ENCODE measurements at regions of chr20 and their contacts with region 1.

Region 1: DNA sequence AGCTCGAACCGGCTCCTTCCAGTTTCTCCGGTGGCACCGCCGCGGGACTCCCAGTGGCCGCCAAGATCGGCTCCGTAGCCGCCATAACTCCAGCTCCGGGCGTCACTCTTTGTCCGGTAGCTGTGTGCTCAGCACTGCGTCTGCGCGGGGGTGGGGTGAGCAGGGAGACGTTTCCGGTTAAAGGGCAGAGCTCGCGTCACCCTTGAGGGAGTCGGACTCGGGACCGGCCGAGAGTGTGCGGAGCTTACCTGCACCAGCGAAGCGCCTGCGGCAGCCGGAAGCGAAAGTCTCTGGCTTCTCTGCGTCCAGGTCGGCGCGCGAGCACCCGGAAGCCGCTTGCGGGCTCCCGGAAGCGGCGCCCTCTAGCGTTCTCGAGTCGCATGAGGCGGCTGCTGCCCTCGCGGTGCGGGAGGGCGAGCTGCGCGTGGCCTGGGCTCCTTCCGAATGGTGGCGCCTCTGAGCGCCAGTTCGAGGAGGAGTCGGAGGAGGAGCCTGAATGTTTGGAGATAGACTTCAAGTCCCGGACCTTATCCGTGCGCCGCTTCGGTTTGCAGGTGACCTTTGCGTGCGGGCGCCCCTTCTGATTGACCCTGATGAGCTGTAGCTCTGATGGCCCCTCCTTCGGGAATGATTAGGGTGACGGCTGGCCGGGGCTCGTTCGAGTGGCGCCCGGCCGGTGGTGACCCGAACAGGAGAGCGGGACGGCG is at the start of gene SCAND1:
- DNase-seq: peak; percentile 91 to 99 (median 95)
- ATAC-seq: peak; percentile 86 to 91 (median 88)
- H3K4me3 ChIP-seq: peak within 1 kb of the TSS; percentile 82 to 87
- H3K4me3 Mint-ChIP-seq: peak within 1 kb of the TSS; percentile 95 to 99 (median 99)
- H3K27ac ChIP-seq: peak within 1 kb of the TSS; percentile 98
- H3K27ac Mint-ChIP-seq: peak within 1 kb of the TSS; percentile 99 to 100
- H3K4me1 ChIP-seq: peaks cover 14 to 29% of the 10 kb centered on the region in 2 experiments
- H3K4me1 Mint-ChIP-seq: peaks cover 20 to 23% (median 21%) of the 10 kb centered on the region in 3 donors
- H3K27me3 ChIP-seq: no peaks in the 10 kb centered on the region
- H3K27me3 Mint-ChIP-seq: no peaks in the 10 kb centered on the region
- total RNA-seq, gene SCAND1: 50.0 to 78.8 (median 70.8) TPM

Region 2: DNA sequence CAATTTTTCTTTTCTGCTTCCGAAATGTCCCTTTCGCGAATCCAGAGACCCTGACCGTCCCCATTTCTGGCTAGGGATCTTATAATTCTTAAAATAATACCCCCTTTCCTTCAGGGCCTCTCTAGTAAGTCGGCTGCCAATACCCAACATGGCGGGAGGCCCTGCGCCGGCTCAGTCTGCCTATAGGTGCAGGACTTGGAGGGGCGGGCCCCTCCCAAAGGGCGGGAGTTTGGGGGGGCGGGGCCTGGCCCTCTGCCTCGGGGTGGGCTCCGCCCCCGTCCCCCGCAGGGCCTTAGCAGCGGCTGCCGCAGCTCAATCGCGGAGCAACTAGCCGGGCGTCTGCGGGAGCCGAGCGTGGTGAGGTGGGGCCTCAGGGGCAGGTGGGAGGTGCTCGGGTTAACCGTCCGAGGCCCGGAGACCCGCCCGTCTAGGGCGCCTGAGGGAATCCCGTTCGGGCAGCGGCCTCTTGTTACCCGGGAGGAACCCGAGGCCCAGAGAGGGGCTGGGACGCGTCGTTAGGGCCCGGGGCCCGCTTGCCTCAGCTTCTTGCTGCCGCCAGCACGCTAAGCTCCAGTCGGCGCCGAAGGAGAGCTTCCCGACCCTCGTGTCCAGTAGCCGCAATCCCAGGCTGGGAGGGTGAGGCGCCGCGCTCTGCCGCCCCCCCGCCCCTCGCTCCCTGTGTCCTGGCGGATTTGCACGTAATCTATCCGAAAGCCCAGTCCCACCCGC is 499.3 kb before region 1 on chr20 and contains the start of gene CEP250:
- CTCF ChIA-PET with region 1: interaction called in 1 of 2 experiments, 13 read pairs
- POLR2A ChIA-PET with region 1: interaction called in 1 of 2 experiments, 7 read pairs
- DNase-seq: peak; percentile 88 to 96 (median 93)
- ATAC-seq: peak; percentile 95 to 99 (median 98)
- H3K4me3 ChIP-seq: peak within 1 kb of the TSS; percentile 97 to 99
- H3K4me3 Mint-ChIP-seq: peak within 1 kb of the TSS; percentile 86 to 94 (median 93)
- H3K27ac ChIP-seq: peak within 1 kb of the TSS; percentile 90
- H3K27ac Mint-ChIP-seq: peak within 1 kb of the TSS; percentile 98 to 99
- H3K4me1 ChIP-seq: peaks cover 7 to 19% of the 10 kb centered on the region in 2 experiments
- H3K4me1 Mint-ChIP-seq: peaks cover 8 to 29% (median 22%) of the 10 kb centered on the region in 3 donors
- H3K27me3 ChIP-seq: no peaks in the 10 kb centered on the region
- H3K27me3 Mint-ChIP-seq: no peaks in the 10 kb centered on the region
- total RNA-seq, gene CEP250: 45.7 to 70.7 (median 67.4) TPM

Region 3: DNA sequence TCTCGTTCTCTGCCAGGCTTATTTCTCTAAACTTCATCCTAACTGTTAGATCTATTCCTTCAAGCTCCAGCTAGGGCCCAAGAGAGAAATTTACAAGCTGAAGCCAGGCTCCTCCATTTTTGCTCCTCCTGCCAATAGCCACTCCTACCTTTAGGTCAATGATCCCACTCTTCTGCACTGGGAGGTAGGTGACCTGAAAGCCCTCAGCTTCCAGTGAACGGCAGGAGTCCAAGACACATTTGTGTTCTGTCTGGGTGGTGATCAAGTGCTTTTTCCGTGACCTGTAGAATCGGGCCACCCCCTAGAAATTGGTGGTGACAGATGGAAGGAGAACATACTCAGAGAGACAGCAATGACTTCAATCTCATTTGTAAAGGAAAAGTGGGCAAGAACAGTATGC is 264.1 kb before region 1 on chr20:
- CTCF ChIA-PET with region 1: no interaction called
- POLR2A ChIA-PET with region 1: no interaction called
- DNase-seq: no peak
- ATAC-seq: no peak
- H3K4me3 ChIP-seq: no peak overlapping the region
- H3K4me3 Mint-ChIP-seq: no peak overlapping the region
- H3K27ac ChIP-seq: no peak overlapping the region
- H3K27ac Mint-ChIP-seq: no peak overlapping the region
- H3K4me1 ChIP-seq: no peaks in the 10 kb centered on the region
- H3K4me1 Mint-ChIP-seq: peaks cover 2 to 4% (median 3%) of the 10 kb centered on the region in 3 donors
- H3K27me3 ChIP-seq: no peaks in the 10 kb centered on the region
- H3K27me3 Mint-ChIP-seq: no peaks in the 10 kb centered on the region

Region 4: GRCh38 chr20:35942243-35942642 is 12.1 kb before region 1 on chr20:
- CTCF ChIA-PET with region 1: interaction called in 1 of 2 experiments, 13 read pairs
- POLR2A ChIA-PET with region 1: interaction called, 3 to 5 read pairs
- DNase-seq: no peak
- ATAC-seq: no peak
- H3K4me3 ChIP-seq: no peak overlapping the region
- H3K4me3 Mint-ChIP-seq: no peak overlapping the region
- H3K27ac ChIP-seq: no peak overlapping the region
- H3K27ac Mint-ChIP-seq: peak overlapping the region in 1 of 2 donors; percentile 33
- H3K4me1 ChIP-seq: no peaks in the 10 kb centered on the region
- H3K4me1 Mint-ChIP-seq: peaks cover 0 to under 1% (median 0%) of the 10 kb centered on the region in 3 donors
- H3K27me3 ChIP-seq: no peaks in the 10 kb centered on the region
- H3K27me3 Mint-ChIP-seq: no peaks in the 10 kb centered on the region

Measured in T-cell (primary cell).